K562 (cell line): ENCODE measurements at regions of chr3 and their contacts with region 1.

Region 1: GRCh38 chr3:129439817-129440617 is at the starts of genes IFT122 and MBD4:
- DNase-seq: peak; percentile 91 to 98 (median 94)
- ATAC-seq: peak; percentile 91
- H3K4me3 ChIP-seq: peak within 1 kb of the TSS; percentile 76
- H3K27ac ChIP-seq: peak within 1 kb of the TSS; percentile 94
- H3K4me1 ChIP-seq: peaks cover 7 to 41% of the 10 kb centered on the region in 2 experiments
- H3K27me3 ChIP-seq: no peaks in the 10 kb centered on the region
- CTCF ChIP-seq: no peak
- EP300 ChIP-seq: peak; percentile 47; the same call in 1 of the 2 replicates
- POLR2A ChIP-seq: peak; percentile 91
- RAD21 ChIP-seq: 0 out of 4 replicates have a peak, but pooled peaks of 1 of the 2 experiments have one; percentile 9
- polyA plus RNA-seq, gene IFT122: 2.4 to 7.0 TPM
- polyA plus RNA-seq, gene MBD4: 13.3 to 16.6 TPM

Region 2: DNA sequence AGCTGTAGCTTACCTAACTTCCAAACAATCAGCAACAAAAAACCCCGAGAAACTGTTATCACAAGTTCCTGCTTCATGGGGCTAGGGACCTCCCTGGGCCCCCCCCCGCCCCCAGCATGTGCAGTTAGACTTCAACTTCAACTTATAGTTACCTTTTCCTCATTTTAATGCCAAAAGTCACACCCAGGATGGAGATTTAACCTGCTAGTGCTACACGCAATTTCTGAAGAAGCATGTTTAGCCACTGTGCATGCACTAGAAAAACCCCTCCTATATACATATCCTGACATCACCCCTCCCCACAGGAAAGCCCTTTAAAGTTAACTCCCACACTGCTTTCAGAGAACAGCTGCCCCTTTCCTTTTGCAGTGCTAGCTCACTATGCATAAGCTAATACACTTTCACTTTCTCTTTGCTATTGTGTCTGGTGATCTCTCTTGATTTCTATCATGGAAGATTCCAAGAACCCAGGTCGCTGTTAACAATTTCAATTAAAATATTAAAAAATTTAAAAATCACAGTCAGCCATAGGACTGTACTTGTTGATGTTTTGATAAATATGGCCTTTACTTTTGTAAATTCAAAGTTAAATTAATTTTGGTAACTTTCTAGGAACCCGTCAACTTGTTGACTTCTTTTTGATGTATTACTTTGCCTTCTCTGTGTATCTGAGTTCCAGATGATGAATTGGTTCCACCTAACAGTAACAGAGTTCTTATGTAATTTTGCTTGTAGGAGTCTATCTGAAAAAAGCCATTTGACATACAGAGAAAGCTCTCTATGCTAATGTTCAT is 635.8 kb before region 1 on chr3:
- CTCF ChIA-PET with region 1: no interaction called
- POLR2A ChIA-PET with region 1: no interaction called
- in situ Hi-C with region 1: no loop called
- intact Hi-C with region 1: no loop called
- DNase-seq: peak; percentile 24 to 59 (median 48)
- ATAC-seq: peak; percentile 97
- H3K4me3 ChIP-seq: no peak overlapping the region
- H3K27ac ChIP-seq: peak overlapping the region; percentile 51; the same call in 1 of the 3 replicates
- H3K4me1 ChIP-seq: peaks cover 0 to 22% of the 10 kb centered on the region in 2 experiments; a peak in 3 of 5 replicates
- H3K27me3 ChIP-seq: no peaks in the 10 kb centered on the region
- CTCF ChIP-seq: no peak
- EP300 ChIP-seq: peak; percentile 16; the same call in 1 of the 2 replicates
- POLR2A ChIP-seq: no peak
- RAD21 ChIP-seq: no peak

Region 3: GRCh38 chr3:129161860-129162531 is 278.0 kb before region 1 on chr3:
- CTCF ChIA-PET with region 1: no interaction called
- POLR2A ChIA-PET with region 1: no interaction called
- in situ Hi-C with region 1: no loop called
- intact Hi-C with region 1: no loop called
- DNase-seq: peak in 1 of 4 experiments; percentile 21
- ATAC-seq: peak; percentile 45
- H3K4me3 ChIP-seq: peak overlapping the region; percentile 67
- H3K27ac ChIP-seq: peak overlapping the region; percentile 100
- H3K4me1 ChIP-seq: peaks cover 0 to 11% of the 10 kb centered on the region in 2 experiments; a peak in 3 of 5 replicates
- H3K27me3 ChIP-seq: no peaks in the 10 kb centered on the region
- CTCF ChIP-seq: 0 out of 6 replicates have a peak, but pooled peaks of 1 of the 3 experiments have one; percentile 2
- EP300 ChIP-seq: no peak
- POLR2A ChIP-seq: no peak
- RAD21 ChIP-seq: no peak

Region 4: DNA sequence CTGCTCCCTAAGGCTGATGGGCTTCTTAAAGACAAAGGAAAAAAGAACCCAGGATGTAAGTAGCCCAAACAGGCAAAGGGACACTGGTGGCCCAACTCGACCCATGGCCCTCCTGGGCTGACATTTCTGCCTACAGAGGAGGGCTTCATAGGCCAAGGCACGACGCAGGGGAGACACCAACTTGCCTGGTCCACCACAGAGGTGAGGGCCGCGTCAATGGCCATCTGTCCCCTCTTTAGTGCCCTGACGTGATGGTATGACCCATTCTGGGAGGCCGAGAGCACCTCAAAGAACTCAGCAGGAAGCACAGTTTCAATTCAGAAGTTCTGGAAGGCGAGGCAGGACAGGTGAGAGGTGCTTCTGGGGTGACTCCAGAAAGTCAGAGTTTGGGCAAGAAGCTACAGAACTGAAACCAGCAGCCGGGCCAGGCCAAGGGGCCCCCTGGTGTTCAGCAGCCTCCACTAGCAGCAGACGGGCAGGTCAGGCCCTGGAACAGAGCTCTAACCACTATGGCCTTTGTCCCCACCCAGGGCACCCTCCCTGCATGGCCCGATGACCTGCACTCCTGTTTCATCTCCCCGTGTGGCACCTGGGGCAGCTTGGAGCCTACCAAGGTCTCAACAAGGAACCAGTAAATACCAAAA is 116.2 kb before region 1 on chr3:
- CTCF ChIA-PET with region 1: no interaction called
- POLR2A ChIA-PET with region 1: no interaction called
- in situ Hi-C with region 1: no loop called
- intact Hi-C with region 1: loop called (anchors 5 kb)
- DNase-seq: peak; percentile 25 to 45 (median 28)
- ATAC-seq: peak; percentile 76
- H3K4me3 ChIP-seq: no peak overlapping the region
- H3K27ac ChIP-seq: no peak overlapping the region
- H3K4me1 ChIP-seq: peaks cover 4 to 20% of the 10 kb centered on the region in 2 experiments; a peak in 4 of 5 replicates
- H3K27me3 ChIP-seq: no peaks in the 10 kb centered on the region
- CTCF ChIP-seq: peak; percentile 27 to 36 (median 32); a peak in 3 of 6 replicates
- EP300 ChIP-seq: no peak
- POLR2A ChIP-seq: no peak
- RAD21 ChIP-seq: no peak; a peak in 1 of 4 replicates

Region 5: DNA sequence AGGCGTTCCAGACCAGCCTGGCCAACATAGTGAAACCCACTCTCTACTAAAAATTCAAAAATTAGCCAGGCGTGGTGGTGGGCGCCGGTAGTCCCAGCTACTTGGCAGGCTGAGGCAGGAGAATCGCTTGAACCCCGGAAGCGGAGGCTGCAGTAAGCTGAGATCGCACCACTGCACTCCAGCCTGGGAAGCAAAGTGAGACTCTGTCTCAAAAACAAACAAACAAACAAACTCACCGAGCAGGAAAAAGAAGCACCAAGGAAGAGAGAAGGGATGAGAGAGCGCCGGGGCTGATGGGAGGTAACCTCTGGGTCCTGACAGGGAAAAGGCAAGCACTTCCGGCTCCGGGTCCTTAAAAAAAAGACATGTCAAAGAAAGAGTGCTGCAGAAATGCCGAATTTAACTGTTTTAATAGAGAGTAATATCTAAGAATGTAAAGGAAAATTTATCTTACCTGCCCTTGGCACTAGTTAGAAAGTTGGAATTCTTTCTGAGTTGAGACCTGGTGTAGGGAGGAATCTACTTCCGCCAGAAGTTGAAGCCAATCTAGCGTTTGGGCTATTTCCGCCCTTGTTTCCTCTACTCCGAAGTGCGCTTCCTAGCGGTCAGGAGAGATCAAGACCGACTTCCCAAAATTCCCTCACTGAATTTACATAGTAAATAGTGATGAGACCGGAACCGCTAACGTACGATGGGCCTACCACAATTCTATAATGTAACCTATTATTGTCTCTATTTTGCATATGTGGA is 40.7 kb before region 1 on chr3:
- CTCF ChIA-PET with region 1: no interaction called
- POLR2A ChIA-PET with region 1: interaction called, 6 read pairs
- in situ Hi-C with region 1: no loop called
- intact Hi-C with region 1: loop called (anchors 5 kb)
- DNase-seq: peak; percentile 79 to 92 (median 81)
- ATAC-seq: peak; percentile 86
- H3K4me3 ChIP-seq: peak overlapping the region; percentile 73
- H3K27ac ChIP-seq: peak overlapping the region; percentile 87
- H3K4me1 ChIP-seq: peaks cover 0 to 7% of the 10 kb centered on the region in 2 experiments; a peak in 4 of 5 replicates
- H3K27me3 ChIP-seq: no peaks in the 10 kb centered on the region
- CTCF ChIP-seq: peak; percentile 56 to 73 (median 71)
- EP300 ChIP-seq: no peak
- POLR2A ChIP-seq: no peak; the same call in 1 of the 2 replicates
- RAD21 ChIP-seq: no peak

Region 6: DNA sequence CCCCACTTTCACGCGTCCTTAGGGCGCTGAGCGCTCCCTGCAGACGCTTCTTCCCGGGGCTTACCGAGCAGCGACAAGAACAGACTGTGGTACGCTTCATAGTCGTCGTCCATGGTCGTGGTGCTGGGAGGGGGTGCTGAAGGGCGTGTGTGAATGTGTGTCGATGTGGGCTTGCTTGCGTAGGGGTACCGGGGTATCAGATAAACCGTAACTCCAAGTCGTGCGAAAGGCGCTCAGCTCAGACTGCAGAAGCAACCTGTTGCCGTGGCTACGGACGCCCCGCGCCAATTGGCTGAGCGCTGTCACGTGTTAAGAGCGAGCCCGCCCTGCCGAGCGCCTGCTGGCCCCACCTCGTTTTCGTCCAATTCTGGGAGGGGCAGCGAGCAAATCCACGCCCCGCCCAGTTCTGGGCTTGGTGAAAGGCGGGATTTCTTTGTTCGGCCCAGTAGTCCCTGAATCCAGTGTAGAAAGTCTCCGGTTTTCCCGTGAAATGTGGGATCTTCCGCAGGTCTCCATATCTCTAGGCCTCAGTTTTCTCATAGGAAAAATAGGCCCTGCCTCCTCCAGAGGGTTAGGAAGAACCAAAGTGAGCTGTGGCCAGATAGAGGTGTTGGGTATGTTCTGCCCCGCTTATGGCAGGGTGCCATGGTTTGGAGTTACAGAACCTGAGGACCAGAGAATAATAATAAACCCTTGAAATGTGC is 11.5 kb before region 1 on chr3 and contains the start of gene EFCAB12:
- CTCF ChIA-PET with region 1: no interaction called
- POLR2A ChIA-PET with region 1: interaction called, 67 read pairs
- in situ Hi-C with region 1: no loop called
- intact Hi-C with region 1: no loop called
- DNase-seq: peak; percentile 91 to 95 (median 92)
- ATAC-seq: peak; percentile 97
- H3K4me3 ChIP-seq: peak within 1 kb of the TSS; percentile 41
- H3K27ac ChIP-seq: peak within 1 kb of the TSS; percentile 64
- H3K4me1 ChIP-seq: peaks cover 27 to 35% of the 10 kb centered on the region in 2 experiments; a peak in 4 of 5 replicates
- H3K27me3 ChIP-seq: no peaks in the 10 kb centered on the region
- CTCF ChIP-seq: no peak; a peak in 1 of 6 replicates
- EP300 ChIP-seq: no peak
- POLR2A ChIP-seq: peak; percentile 49; the same call in 1 of the 2 replicates
- RAD21 ChIP-seq: no peak; a peak in 1 of 4 replicates
- polyA plus RNA-seq, gene EFCAB12: 0.08 TPM in 1 of 2 experiments, not detected in the other

Region 7: GRCh38 chr3:129481766-129482332 is 41.8 kb after region 1 on chr3:
- CTCF ChIA-PET with region 1: no interaction called
- POLR2A ChIA-PET with region 1: interaction called, 4 read pairs
- in situ Hi-C with region 1: no loop called
- intact Hi-C with region 1: loop called (anchors 5 kb)
- DNase-seq: peak; percentile 22 to 46 (median 24)
- ATAC-seq: peak; percentile 78
- H3K4me3 ChIP-seq: no peak overlapping the region
- H3K27ac ChIP-seq: no peak overlapping the region; the same call in 2 of the 3 replicates
- H3K4me1 ChIP-seq: peaks cover 14 to 21% of the 10 kb centered on the region in 2 experiments; a peak in 4 of 5 replicates
- H3K27me3 ChIP-seq: no peaks in the 10 kb centered on the region
- CTCF ChIP-seq: no peak
- EP300 ChIP-seq: no peak
- POLR2A ChIP-seq: no peak
- RAD21 ChIP-seq: no peak

Region 8: GRCh38 chr3:129994883-129995559 is 555.0 kb after region 1 on chr3:
- CTCF ChIA-PET with region 1: no interaction called
- POLR2A ChIA-PET with region 1: no interaction called
- in situ Hi-C with region 1: no loop called
- intact Hi-C with region 1: no loop called
- DNase-seq: no peak
- ATAC-seq: no peak
- H3K4me3 ChIP-seq: no peak overlapping the region
- H3K27ac ChIP-seq: no peak overlapping the region
- H3K4me1 ChIP-seq: no peaks in the 10 kb centered on the region
- H3K27me3 ChIP-seq: peaks cover 10 to 40% of the 10 kb centered on the region in 2 experiments
- CTCF ChIP-seq: no peak
- EP300 ChIP-seq: no peak
- POLR2A ChIP-seq: no peak
- RAD21 ChIP-seq: no peak